ENCODE measurements at regions of chr5 and their contacts with region 1.

Region 1: GRCh38 chr5:31825518-31826068 is 186.7 kb downstream of the PDZD2 start:
- DNase-seq: no peak
- ATAC-seq: peak; percentile 88

Region 2: GRCh38 chr5:32076699-32077695 is 251.4 kb after region 1 on chr5:
- intact Hi-C with region 1: loop called (anchors 5 kb)
- DNase-seq: peak; percentile 67
- ATAC-seq: peak; percentile 89

Region 3: DNA sequence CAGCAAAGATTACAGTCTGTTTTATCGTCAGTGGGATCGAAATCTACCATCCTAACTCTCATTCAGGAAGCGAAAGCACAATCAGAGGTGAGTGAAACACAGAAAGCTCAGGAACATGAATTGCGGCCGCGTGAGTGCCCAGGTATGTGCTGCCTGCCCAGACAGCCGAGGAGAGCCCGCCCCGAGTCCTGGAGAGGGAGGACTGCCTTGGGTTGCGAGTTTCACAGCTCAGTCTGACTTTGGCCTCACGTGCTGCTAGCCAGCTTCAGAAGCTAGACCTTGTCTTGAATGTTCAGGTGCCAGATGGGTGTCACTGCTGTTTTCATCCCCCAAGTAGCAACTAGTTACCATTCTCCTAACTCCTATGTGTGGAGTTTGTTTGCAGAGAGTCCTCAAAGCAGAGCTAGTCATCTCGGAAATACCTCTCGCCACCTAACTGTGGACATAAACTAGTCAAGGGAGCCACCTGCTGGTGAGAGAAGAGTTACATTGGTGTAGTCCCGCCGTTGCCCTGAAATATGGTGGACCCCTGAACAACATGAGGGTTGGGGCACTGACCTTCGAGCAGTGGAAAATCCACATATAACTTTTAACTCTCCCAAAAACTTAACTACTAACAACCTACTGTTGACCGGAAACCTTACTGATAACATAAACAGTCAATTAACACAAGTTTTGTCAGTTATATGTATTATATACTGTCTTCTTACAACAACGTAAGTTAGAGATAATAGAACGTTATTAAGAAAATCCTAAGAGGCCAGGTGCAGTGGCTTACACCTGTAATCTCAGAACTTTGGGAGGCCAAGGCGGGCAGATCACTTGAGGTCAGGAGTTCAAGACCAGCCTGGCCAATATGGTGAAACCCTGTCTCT is 267.6 kb after region 1 on chr5:
- intact Hi-C with region 1: loop called (anchors 5 kb)
- DNase-seq: no peak
- ATAC-seq: peak; percentile 79